ENCODE measurements at regions of chr5 and their contacts with region 1.

Region 1: GRCh38 chr5:13976867-13977830 is 32.7 kb upstream of the DNAH5 start:
- DNase-seq: peak; percentile 53
- H3K4me3 ChIP-seq: no peak overlapping the region
- H3K27ac ChIP-seq: no peak overlapping the region
- H3K4me1 ChIP-seq: no peaks in the 10 kb centered on the region
- H3K27me3 ChIP-seq: no peaks in the 10 kb centered on the region
- CTCF ChIP-seq: peak; percentile 47 to 68

Region 2: DNA sequence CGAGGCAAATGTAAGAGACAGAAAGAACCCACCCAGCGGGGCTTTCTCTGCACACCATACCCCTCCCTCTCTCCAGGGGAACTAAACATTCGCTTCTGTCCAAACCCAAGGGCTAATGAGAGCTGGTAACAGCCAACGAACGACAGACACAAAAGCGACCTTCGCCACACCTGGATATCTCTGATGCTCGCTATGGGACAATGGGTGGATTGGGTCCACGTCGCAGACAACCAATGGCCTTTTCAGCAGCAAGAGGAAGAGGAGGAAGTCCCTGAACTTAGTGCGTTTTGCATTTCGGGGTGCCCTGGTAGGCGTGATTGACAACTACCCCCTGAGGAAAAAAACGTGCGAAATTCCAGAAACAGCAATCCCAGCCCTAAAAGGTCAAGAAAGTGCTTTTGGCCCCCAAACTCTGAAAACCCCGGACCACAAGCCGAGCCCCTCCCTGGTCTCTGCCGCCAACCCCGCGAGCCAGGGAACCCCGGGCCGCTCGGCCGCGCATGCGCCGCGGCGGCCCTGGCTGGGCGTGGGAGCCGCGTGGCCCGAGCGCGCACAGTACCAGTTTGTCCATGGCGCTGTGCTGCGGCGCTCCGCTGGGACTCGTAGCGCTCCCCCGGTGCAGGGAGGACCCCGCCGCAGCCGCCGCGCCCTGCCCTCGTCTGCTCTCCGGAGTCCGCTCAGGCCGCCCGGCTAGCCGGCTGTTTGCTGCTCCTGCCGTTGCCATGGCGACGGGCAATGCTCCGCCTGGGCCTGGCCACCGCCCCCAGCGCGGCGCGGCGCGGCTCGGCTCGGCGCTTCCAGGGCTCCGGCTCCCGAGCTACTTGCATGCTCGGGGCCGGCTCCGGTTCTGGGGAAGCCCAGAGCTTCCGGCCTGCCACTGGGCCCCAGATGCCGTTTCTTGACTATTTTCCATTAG is 34.2 kb after region 1 on chr5:
- CTCF ChIA-PET with region 1: no interaction called
- dilution Hi-C with region 1: no loop called
- in situ Hi-C with region 1: no loop called
- intact Hi-C with region 1: no loop called
- DNase-seq: peak; percentile 90
- H3K4me3 ChIP-seq: peak overlapping the region; percentile 55 to 73 (median 62)
- H3K27ac ChIP-seq: peak overlapping the region; percentile 87
- H3K4me1 ChIP-seq: peaks cover 5% of the 10 kb centered on the region
- H3K27me3 ChIP-seq: no peaks in the 10 kb centered on the region
- CTCF ChIP-seq: peak in 1 of 2 donors; percentile 17

Region 3: DNA sequence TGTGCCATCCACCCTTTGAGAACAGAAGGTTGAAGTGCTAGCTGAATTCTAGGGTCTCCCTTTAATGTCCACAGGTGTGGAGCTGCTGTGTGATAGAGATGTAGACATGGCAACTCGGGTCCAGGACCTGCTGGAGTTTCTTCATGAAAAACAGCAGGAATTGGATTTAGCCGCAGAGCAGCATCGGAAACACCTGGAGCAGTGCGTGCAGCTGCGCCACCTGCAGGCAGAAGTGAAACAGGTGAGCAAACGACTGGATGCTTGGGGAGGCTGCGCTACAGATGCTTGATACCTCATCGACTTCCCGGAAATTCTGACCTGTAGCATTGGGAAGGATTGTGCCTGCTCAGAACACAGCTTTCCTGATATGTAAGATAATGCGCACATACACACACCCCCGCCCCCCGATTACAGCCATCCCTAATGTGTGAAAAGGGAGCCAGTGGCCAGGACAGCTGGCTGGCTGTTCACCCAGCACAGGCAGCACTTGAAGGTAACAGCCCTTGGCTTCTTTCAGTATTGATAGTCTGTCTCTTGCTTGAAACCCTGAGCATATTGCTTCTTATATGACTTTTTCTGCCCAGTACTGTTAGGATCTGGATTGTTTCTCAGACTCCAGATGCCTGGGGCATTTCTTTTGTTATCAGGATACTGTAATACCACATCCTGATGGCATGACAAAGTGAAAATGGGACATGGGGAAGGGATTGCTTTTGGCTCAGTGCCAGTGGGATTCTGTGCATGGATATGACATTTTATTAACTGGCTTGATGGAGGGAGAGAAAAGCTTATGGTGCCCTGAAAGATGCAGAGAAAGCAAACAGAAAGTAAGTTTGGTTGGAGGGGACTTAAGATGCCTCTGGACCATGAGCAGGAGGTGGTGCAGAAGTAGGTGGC is 387.7 kb after region 1 on chr5:
- CTCF ChIA-PET with region 1: no interaction called
- dilution Hi-C with region 1: loop called (anchors 5 kb)
- in situ Hi-C with region 1: loop called in 1 of 2 experiments (anchors 25 kb)
- intact Hi-C with region 1: loop called (anchors 2 kb)
- DNase-seq: peak; percentile 15
- H3K4me3 ChIP-seq: no peak overlapping the region
- H3K27ac ChIP-seq: no peak overlapping the region
- H3K4me1 ChIP-seq: peaks cover 6% of the 10 kb centered on the region
- H3K27me3 ChIP-seq: no peaks in the 10 kb centered on the region
- CTCF ChIP-seq: peak; percentile 75 to 76

Measured in mammary epithelial cell (primary cell).